ENCODE measurements at regions of chr2 and their contacts with region 1.

Region 1: GRCh38 chr2:63841254-63842022 is at the start of gene UGP2:
- H3K4me3 ChIP-seq: peak within 1 kb of the TSS; percentile 68
- H3K27ac ChIP-seq: peak within 1 kb of the TSS; percentile 98
- H3K4me1 ChIP-seq: peaks cover 13% of the 10 kb centered on the region
- CTCF ChIP-seq: peak; percentile 85

Region 2: GRCh38 chr2:63588385-63589147 is 252.9 kb before region 1 on chr2 and contains the starts of genes MDH1 and WDPCP:
- CTCF ChIA-PET with region 1: no interaction called
- POLR2A ChIA-PET with region 1: interaction called, 21 read pairs
- H3K4me3 ChIP-seq: peak within 1 kb of the TSS; percentile 100
- H3K27ac ChIP-seq: peak within 1 kb of the TSS; percentile 74
- H3K4me1 ChIP-seq: peaks cover 19% of the 10 kb centered on the region
- CTCF ChIP-seq: no peak

Region 3: DNA sequence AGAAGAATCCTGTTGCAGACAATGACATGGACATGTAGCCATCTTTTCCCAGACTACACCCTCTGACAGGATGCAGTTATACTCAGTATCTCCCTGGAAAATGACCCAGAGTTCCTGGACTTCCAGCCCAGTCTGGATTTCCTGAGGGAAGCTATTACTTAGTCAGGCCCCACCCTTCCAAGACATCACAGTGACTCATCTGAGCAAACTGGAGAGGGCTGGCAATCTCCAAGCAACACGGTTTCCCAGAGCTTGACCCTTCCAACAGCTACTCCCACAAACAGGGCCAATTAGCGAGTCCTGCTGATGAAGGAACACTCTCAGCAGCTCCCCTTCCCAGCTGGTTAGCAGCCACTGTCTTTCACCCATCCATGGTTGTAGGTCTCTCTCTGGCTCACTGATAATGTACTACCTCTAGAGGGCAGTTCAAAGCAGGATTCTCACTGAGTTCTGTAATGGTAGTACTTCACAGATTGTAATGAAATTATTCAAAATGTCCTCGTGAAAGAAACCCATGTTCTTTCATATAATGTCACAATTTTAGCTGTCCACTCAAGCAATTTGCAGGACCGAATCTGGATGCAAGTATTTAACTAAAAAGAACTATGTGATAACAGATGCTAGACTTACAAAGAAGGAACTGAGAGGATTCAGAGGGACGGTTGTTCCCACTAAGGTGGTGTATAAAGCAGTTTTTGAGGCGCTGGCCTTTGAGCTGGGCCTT is 142.5 kb before region 1 on chr2:
- CTCF ChIA-PET with region 1: interaction called, 3 read pairs
- POLR2A ChIA-PET with region 1: interaction called, 18 read pairs
- H3K4me3 ChIP-seq: no peak overlapping the region
- H3K27ac ChIP-seq: no peak overlapping the region
- H3K4me1 ChIP-seq: no peaks in the 10 kb centered on the region
- CTCF ChIP-seq: 0 out of 2 replicates have a peak, but pooled peaks have one; percentile 24

Region 4: DNA sequence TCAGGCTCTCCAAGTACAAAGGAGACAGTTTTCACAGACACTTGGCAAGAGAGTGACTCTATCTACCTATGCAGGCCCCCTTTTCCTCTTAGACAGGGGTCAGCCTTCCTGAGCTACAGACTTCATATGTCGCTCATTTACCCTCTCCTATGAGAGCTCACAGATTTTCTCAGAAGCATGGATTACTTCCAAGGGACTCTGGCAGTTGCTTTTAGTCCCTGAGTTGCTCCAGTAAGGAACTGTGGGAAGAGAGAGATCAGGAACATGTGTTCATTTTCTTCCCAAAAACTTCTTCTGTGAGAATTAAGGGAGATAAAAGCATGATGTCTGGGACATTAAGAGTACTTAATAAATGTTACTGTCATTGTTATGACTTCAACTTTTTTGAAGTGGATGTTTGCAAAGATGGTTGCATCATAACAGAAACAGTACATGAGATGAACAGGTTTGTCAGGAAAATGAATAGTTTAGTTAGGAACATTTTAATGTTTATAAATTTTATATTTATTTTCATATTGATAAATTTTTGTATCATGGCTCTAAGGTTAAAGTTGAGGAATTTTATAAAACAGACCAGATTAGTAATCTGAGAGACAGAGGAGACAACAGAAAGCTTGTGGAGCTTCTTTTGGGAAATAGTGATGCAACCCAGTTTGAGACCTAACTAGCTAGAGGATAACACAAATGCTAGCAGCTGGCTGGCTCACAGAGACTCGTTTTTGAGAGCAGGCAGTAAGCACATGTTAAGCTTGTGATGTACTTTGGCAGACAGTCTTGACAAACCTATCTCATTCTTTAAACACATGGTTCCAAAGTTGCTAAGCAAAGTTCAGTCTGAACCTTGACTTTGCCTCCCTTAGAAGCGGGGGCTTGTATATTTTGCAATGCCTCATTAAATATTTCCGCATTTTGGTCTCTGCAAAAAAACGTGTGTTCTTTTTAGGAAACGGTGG is 21.4 kb before region 1 on chr2:
- CTCF ChIA-PET with region 1: interaction called, 3 read pairs
- POLR2A ChIA-PET with region 1: interaction called, 14 read pairs
- H3K4me3 ChIP-seq: no peak overlapping the region
- H3K27ac ChIP-seq: no peak overlapping the region
- H3K4me1 ChIP-seq: peaks cover 7% of the 10 kb centered on the region; the same call in 1 of the 2 replicates
- CTCF ChIP-seq: no peak

Region 5: GRCh38 chr2:63827749-63828148 is 13.7 kb before region 1 on chr2:
- CTCF ChIA-PET with region 1: no interaction called
- POLR2A ChIA-PET with region 1: interaction called, 40 read pairs
- H3K4me3 ChIP-seq: no peak overlapping the region
- H3K27ac ChIP-seq: no peak overlapping the region
- H3K4me1 ChIP-seq: no peaks in the 10 kb centered on the region
- CTCF ChIP-seq: no peak

Region 6: DNA sequence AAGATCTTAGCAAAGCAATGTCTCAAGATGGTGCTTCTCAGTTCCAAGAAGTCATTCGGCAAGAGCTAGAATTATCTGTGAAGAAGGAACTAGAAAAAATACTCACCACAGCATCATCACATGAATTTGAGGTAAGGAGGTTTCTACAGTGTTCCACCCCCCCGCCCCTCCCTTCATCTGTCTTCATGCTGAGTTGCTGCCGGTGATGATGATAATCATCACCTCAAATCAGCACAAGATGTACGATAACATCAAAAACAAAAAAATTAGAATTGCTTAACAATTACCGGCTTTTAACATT is 14.8 kb after region 1 on chr2:
- CTCF ChIA-PET with region 1: interaction called, 6 read pairs
- POLR2A ChIA-PET with region 1: interaction called, 19 read pairs
- H3K4me3 ChIP-seq: no peak overlapping the region
- H3K27ac ChIP-seq: no peak overlapping the region
- H3K4me1 ChIP-seq: no peaks in the 10 kb centered on the region
- CTCF ChIP-seq: no peak

Region 7: DNA sequence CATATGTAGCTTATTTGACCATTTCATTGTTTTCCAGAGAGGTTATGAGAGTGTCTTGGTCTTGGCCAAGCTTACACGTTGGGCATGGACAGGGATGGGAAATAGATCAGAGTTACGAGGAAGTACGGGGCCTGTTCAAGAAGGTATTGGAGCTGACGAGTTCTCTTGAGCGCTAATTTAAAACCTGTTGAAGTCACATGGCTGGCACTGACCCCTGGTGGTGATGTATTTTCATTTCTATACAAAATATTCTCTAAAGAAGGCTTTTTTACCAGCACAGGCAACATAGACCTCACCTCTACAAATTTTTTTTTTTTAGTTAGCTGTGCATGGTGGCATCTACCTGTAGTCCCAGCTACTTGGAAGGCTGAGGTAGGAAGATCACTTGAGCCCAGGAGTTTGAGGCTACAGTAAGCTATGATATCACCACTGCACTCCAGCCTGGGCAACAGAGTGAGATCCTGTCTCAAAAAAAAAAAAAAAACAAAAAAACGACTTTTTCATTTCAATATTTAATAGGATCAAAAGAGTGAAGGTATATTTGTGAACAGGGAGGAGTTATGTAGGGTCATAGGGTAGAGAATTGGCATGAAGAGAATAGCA is 19.9 kb after region 1 on chr2:
- CTCF ChIA-PET with region 1: interaction called, 6 read pairs
- POLR2A ChIA-PET with region 1: interaction called, 19 read pairs
- H3K4me3 ChIP-seq: no peak overlapping the region
- H3K27ac ChIP-seq: no peak overlapping the region
- H3K4me1 ChIP-seq: no peaks in the 10 kb centered on the region
- CTCF ChIP-seq: no peak

Measured in HEK293 (cell line).